PC-9 (cell line): ENCODE measurements at regions of chr7 and their contacts with region 1.

Region 1: DNA sequence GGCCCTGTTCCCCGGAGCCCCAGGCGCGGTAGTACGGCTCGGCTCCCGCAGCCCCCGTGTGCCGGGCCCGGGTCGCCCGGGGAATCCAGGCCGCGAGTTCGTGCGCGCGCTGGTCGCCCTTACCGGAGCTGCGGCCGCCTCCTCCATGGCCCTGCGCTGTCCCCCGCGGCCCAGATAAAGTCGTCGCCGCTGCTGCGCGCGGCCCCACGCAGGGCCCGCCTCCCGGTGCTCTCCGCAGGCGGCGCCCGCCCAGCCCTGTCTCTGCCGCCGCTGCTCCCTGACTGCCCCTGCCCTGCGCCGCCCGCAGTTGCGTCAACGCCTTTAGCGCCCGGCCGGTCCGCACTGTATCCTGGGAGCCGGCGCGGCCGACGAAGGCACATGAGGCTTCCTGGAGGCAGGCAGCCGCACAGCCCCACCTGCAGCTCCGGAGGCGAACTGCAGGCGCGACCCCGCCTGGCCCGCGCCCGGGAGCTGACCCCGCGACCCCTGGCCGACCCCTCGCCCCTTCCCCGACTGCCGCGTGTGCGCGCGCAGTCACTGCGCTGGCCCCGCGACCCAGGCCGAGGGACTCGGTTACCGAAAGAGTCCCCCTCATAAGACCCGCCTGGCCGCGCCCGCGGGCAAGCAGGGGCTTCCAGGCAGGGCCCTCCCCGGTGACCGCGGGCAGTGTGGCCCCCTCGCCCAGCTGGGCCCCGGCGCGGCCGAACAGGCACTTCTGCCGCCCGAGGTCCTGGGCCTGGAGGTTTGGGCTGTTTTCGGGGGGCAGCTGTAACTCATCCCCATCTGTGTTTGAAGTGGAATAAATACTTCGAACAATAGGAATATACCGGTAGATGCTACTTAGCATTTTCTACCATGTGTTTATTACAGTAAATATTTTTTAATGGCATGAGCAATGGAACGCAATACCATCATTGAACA is 127.1 kb upstream of the ZNF746 start:
- DNase-seq: peak; percentile 85 to 96
- H3K4me3 ChIP-seq: peak overlapping the region; percentile 89
- H3K27ac ChIP-seq: 0 out of 2 replicates have a peak overlapping the region, but pooled peaks have one; percentile 33
- H3K4me1 ChIP-seq: peaks cover 21% of the 10 kb centered on the region
- H3K27me3 ChIP-seq: peaks cover 11% of the 10 kb centered on the region
- CTCF ChIP-seq: peak; percentile 91

Region 2: GRCh38 chr7:148987010-148987750 is 637.5 kb before region 1 on chr7:
- CTCF ChIA-PET with region 1: interaction called, 8 read pairs
- POLR2A ChIA-PET with region 1: no interaction called
- intact Hi-C with region 1: loop called (anchors 10 kb)
- DNase-seq: peak; percentile 86 to 91
- H3K4me3 ChIP-seq: peak overlapping the region; percentile 88
- H3K27ac ChIP-seq: peak overlapping the region; percentile 78
- H3K4me1 ChIP-seq: peaks cover 46% of the 10 kb centered on the region
- H3K27me3 ChIP-seq: no peaks in the 10 kb centered on the region
- CTCF ChIP-seq: no peak

Region 3: DNA sequence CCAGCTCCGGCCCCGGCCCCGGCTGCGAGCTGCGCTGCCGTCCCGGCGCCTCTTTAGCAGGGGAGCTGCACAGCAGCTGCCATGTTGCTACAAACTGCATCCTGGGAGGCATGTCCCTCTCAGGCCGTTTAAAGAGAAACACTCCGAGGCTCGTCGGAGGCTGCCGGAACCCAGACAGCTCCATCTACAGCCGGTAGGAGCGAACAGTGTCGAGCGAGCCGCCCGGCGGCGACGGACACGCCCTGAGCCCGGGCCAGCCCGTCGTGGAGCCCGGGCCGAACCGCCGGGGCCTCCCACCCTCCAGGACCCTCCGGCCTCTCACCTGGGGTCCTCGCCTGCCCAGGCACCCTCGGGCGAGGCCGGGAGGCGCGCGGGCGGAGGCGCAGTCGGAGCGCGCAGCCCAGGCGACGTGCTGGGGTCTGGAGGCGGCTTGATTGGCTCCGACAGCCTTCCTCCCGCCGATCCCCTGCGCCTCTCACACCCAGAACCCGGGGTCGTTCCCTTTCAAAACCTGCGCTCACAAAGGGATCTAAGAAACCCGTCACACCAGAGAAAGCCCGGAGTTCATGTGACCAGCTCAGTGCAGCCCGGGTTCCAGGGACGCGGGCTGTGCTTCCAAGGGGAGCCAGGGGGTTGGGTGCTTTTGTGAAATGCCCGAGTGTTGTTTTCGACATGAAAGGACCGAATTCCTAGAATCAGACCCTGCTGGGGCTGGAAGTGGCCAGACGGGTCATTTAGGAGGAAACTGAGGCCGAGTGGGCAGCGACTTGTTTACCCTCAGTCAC is 164.0 kb before region 1 on chr7 and contains the start of gene ZNF777:
- CTCF ChIA-PET with region 1: no interaction called
- POLR2A ChIA-PET with region 1: no interaction called
- intact Hi-C with region 1: no loop called
- DNase-seq: peak; percentile 74 to 76
- H3K4me3 ChIP-seq: peak within 1 kb of the TSS; percentile 72
- H3K27ac ChIP-seq: no peak within 1 kb of the TSS
- H3K4me1 ChIP-seq: peaks cover 12% of the 10 kb centered on the region
- H3K27me3 ChIP-seq: no peaks in the 10 kb centered on the region
- CTCF ChIP-seq: peak; percentile 44; the same call in 1 of the 2 replicates
- total RNA-seq, gene ZNF777: 10.6 and 13.3 TPM in 2 replicates

Region 4: GRCh38 chr7:149669121-149669818 is 44.6 kb after region 1 on chr7:
- CTCF ChIA-PET with region 1: interaction called, 4 read pairs
- POLR2A ChIA-PET with region 1: no interaction called
- intact Hi-C with region 1: loop called (anchors 2 kb)
- DNase-seq: no peak
- H3K4me3 ChIP-seq: no peak overlapping the region
- H3K27ac ChIP-seq: no peak overlapping the region
- H3K4me1 ChIP-seq: peaks cover 6% of the 10 kb centered on the region
- H3K27me3 ChIP-seq: no peaks in the 10 kb centered on the region
- CTCF ChIP-seq: peak; percentile 69

Region 5: DNA sequence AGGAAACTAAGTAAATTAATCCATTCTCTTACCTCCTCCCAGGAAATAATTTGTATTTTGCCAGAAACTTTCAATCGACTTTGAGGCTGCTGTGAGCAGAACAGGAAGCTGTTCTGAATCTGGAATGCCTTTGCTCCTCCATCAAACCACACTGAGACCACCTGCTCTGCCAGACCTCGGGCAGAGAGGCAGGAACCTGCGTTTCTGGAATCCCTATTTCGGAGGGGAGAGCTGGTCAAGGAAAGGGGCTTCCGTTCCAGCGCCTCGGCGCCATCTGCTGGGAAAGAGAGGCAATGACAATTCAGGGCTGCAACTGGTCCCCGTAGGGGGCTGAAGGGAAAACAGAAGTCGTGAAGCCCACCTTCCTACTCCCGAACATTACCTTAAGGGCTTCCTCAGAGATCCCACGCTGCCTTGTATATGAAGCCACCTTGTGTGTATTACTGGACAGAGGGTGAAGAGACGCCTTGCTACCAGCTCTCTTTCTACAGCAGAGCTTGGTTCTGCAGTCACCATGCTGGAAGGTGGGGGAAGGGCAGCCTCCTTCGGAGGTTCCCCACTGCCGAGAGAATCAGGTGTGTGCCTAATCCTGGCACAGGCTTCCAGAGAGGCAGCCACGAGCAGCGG is 117.5 kb after region 1 on chr7:
- CTCF ChIA-PET with region 1: interaction called, 3 read pairs
- POLR2A ChIA-PET with region 1: no interaction called
- intact Hi-C with region 1: loop called (anchors 2 kb)
- DNase-seq: peak in 1 of 2 experiments; percentile 76
- H3K4me3 ChIP-seq: peak overlapping the region; percentile 54
- H3K27ac ChIP-seq: no peak overlapping the region
- H3K4me1 ChIP-seq: peaks cover 7% of the 10 kb centered on the region; the same call in 1 of the 2 replicates
- H3K27me3 ChIP-seq: 0 out of 2 replicates have a peak, but pooled peaks cover 12% of the 10 kb centered on the region
- CTCF ChIP-seq: peak; percentile 96

Region 6: DNA sequence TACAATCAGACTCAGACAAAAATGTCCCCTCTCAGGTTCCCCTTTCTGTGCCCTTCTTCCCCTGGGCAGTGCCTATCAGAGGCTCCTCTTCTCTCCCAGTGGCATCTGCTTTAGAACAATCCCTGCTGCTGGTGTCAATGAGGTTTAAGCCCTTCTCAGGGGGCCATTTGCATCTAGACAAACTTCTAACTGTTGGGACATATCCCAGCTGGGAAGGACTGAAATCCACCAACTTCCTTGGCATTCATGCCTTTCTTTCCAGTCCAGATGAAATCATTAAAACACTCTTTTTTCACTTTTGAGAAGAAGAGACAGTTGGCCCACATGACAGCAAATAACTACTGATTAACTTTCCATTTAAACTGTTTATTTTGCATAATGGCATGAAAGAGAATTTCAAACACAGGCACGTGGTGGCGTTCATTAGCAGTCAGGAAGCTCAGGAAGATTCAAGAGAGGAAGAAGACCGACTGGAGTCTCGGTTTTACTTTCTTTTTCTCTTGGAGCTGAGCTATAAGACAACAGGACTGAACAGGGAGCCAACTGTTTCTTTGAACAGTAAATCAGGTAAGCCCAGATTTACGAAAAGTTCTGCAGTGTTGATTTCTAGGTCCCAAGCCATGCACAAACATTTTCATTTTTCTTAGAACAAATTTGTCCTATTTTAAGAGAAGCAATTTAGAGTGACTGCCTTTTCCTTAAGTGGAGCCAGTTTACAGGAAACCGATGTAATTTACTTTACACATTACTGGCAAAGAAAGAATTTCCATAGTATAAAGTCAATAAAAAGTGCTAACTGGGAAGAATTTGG is 1060.7 kb after region 1 on chr7 and contains the start of gene GIMAP2:
- CTCF ChIA-PET with region 1: no interaction called
- POLR2A ChIA-PET with region 1: interaction called, 20 read pairs
- intact Hi-C with region 1: no loop called
- DNase-seq: no peak
- H3K4me3 ChIP-seq: peak within 1 kb of the TSS; percentile 46
- H3K27ac ChIP-seq: no peak within 1 kb of the TSS
- H3K4me1 ChIP-seq: no peaks in the 10 kb centered on the region
- H3K27me3 ChIP-seq: peaks cover 32% of the 10 kb centered on the region; the same call in 1 of the 2 replicates
- CTCF ChIP-seq: no peak
- total RNA-seq, gene GIMAP2: 0.55 and 0.81 TPM in 2 replicates